ENCODE measurements at regions of chr15 and their contacts with region 1.

Region 1: GRCh38 chr15:101288908-101289513 is 6.0 kb downstream of the SNRPA1 start:
- DNase-seq: no peak
- H3K4me3 ChIP-seq: no peak overlapping the region
- H3K27me3 ChIP-seq: no peaks in the 10 kb centered on the region
- CTCF ChIP-seq: peak; percentile 66

Region 2: DNA sequence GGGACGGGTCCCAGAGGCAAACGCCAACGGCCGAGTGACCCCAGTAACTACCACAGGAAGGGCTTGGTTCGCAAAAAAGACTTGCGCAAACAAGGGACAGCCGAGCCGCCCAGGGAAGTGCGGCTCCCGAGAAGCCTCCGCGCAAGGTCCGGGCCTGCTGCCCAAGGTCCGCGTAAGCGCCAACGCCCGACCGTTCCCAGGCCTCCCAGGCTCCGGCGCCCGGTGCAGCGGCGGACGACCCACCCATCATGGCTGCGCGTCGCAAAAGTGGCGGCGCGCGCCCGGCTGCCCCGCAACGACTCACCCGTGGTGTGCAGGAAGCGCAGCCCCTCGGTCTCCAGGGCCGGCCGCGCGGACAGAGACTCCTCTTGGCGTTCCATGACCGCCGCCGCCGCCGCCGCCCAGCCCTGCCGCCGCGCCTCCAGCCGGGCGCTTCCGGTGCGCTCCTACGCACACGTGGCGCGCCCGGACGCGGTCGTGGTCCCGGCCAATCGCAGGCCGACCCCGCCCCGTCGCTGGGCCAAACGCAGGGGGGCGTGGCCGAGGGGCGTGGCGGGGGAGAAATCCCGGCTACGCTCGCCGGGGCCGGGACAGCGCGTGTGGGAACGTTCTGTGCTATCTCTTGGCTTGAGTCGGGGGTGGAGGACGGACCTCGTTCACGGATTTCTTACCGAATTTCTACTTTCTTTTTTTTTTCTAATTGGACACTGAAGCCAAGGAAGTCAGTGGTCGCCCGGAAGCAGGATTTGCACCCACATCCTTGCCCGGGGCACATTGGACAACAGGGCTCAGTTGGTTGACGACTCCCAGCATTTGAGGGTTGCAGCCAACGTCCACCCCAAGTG is 11.8 kb before region 1 on chr15 and contains the start of gene SELENOS:
- CTCF ChIA-PET with region 1: interaction called, 13 read pairs
- POLR2A ChIA-PET with region 1: no interaction called
- DNase-seq: no peak
- H3K4me3 ChIP-seq: peak within 1 kb of the TSS; percentile 78
- H3K27me3 ChIP-seq: no peaks in the 10 kb centered on the region
- CTCF ChIP-seq: no peak
- polyA plus RNA-seq, gene SELENOS: 71.2 and 86.0 TPM in 2 replicates

Measured in BJ (cell line).